ENCODE measurements at regions of chr17 and their contacts with region 1.

Region 1: GRCh38 chr17:30084788-30085187 is 31.8 kb upstream of the NSRP1 start:
- DNase-seq: no peak
- ATAC-seq: no peak
- H3K4me3 ChIP-seq: no peak overlapping the region
- H3K27ac ChIP-seq: no peak overlapping the region
- H3K4me1 ChIP-seq: no peaks in the 10 kb centered on the region
- H3K27me3 ChIP-seq: no peaks in the 10 kb centered on the region
- CTCF ChIP-seq: no peak
- POLR2A ChIP-seq: no peak

Region 2: DNA sequence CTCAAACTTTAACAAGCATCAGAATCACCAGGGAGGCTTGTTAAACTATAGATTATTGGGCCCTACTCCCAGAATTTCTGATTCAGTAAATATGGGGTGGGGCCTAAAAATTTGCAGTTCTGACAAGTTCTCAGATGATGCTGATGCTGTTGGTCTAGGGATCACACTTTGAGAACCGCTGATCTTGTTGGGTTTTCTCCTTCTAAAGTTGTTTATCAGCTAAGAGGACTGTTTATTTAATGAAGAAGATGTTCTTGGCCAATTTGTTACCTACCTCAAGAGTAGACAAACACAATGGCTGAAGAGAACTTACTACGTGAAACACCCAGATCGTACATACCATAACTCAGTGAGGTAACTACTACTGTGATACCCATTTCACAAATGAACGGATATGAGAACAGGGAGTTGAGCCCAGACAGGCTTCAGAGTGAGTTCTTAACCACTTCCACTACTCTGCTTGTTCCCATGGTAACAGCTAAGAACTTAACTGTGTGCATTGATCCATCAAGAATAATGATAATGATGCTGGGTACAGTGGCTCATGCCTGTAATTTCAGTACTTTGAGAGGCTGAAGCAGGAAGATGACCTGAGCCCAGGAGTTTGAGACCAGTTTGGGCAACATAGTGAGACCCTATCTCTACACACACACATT is 53.4 kb before region 1 on chr17:
- intact Hi-C with region 1: loop called in 1 of 10 experiments (anchors 10 kb)
- DNase-seq: no peak
- ATAC-seq: no peak
- H3K4me3 ChIP-seq: no peak overlapping the region
- H3K27ac ChIP-seq: no peak overlapping the region
- H3K4me1 ChIP-seq: no peaks in the 10 kb centered on the region
- H3K27me3 ChIP-seq: no peaks in the 10 kb centered on the region
- CTCF ChIP-seq: no peak
- POLR2A ChIP-seq: no peak

Measured in heart left ventricle (tissue), 16 donors.